Activated CD4-positive, alpha-beta memory T cell treated with anti-CD3 and anti-CD28 coated beads for 36 hours (primary cell): ENCODE measurements at regions of chr20 and their contacts with region 1.

Region 1: GRCh38 chr20:50958615-50959542 is at the start of gene MOCS3:
- DNase-seq: peak; percentile 87
- H3K4me3 Mint-ChIP-seq: peak within 1 kb of the TSS; percentile 91
- H3K27ac Mint-ChIP-seq: peak within 1 kb of the TSS; percentile 98
- H3K4me1 Mint-ChIP-seq: peaks cover 50% of the 10 kb centered on the region
- H3K27me3 Mint-ChIP-seq: no peaks in the 10 kb centered on the region
- total RNA-seq, gene MOCS3: 3.6 to 3.8 TPM

Region 2: DNA sequence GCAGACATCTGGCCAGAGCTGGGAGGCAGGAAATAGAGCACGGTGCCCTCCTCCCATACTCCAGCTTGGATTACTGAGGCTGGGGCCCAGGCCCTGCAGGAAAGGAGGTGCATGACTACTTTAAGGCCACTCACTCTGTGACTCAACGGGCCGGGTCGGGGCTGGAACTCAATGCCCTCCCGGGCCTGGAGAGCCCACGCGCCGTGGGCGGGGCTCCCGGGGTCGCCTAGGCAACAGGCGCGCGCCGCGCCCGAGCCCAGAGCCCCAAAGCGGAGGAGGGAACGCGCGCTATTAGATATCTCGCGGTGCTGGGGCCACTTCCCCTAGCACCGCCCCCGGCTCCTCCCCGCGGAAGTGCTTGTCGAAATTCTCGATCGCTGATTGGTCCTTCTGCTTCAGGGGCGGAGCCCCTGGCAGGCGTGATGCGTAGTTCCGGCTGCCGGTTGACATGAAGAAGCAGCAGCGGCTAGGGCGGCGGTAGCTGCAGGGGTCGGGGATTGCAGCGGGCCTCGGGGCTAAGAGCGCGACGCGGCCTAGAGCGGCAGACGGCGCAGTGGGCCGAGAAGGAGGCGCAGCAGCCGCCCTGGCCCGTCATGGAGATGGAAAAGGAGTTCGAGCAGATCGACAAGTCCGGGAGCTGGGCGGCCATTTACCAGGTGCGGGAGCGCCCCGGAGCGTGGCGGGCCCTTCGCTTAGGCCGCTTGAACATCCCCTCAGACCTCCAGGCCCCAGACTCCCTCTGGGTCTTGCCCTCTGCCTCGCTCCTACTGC is 448.8 kb before region 1 on chr20 and contains the start of gene PTPN1:
- CTCF ChIA-PET with region 1: no interaction called
- POLR2A ChIA-PET with region 1: no interaction called
- intact Hi-C with region 1: no loop called
- DNase-seq: peak; percentile 99
- H3K4me3 Mint-ChIP-seq: peak within 1 kb of the TSS; percentile 86
- H3K27ac Mint-ChIP-seq: peak within 1 kb of the TSS; percentile 87
- H3K4me1 Mint-ChIP-seq: peaks cover 39% of the 10 kb centered on the region
- H3K27me3 Mint-ChIP-seq: no peaks in the 10 kb centered on the region
- total RNA-seq, gene PTPN1: 80.6 to 83.4 TPM

Region 3: GRCh38 chr20:50815162-50815989 is 143.5 kb before region 1 on chr20:
- CTCF ChIA-PET with region 1: interaction called, 6 read pairs
- POLR2A ChIA-PET with region 1: no interaction called
- intact Hi-C with region 1: loop called (anchors 1 kb)
- DNase-seq: no peak
- H3K4me3 Mint-ChIP-seq: peak overlapping the region; percentile 7
- H3K27ac Mint-ChIP-seq: peak overlapping the region; percentile 2
- H3K4me1 Mint-ChIP-seq: peaks cover 15% of the 10 kb centered on the region
- H3K27me3 Mint-ChIP-seq: no peaks in the 10 kb centered on the region